ENCODE measurements at regions of chr3 and their contacts with region 1.

Region 1: GRCh38 chr3:12891985-12892839 is 50.8 kb upstream of the RPL32 start:
- DNase-seq: peak; percentile 70
- H3K4me3 ChIP-seq: no peak overlapping the region
- H3K27ac ChIP-seq: no peak overlapping the region
- H3K4me1 ChIP-seq: peaks cover 4% of the 10 kb centered on the region
- CTCF ChIP-seq: peak; percentile 95

Region 2: DNA sequence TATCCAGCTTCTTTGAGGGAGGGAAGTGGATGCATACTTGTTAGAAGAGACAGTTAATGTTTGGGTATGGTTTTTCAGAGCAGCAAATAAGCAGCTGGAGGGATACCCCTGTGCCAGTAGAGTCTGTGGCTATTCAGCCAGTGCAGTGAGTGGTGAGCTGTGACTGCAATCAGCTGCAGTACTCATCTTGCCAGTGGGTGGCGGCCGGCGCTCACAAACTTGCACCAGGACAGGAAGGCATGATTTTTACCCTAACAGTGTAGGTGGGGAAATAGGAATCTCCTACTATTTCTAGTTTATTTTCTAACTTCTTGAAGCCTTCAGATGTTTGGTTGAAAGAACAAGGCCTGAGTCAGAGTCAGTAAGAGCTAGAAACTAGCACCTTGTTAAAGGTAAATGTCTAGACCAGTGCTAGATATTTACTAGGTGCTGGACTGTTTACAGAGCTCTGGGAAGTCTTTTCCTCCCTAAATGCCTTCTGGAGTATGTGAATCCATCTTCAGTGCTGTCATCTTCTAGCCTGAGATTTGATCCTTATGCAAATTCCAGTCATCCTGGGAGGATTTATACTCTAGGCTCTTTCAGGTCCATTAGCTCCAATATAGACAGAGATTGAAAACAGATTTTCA is 757.1 kb before region 1 on chr3:
- CTCF ChIA-PET with region 1: no interaction called
- POLR2A ChIA-PET with region 1: no interaction called
- intact Hi-C with region 1: loop called (anchors 5 kb)
- DNase-seq: peak; percentile 53
- H3K4me3 ChIP-seq: no peak overlapping the region
- H3K27ac ChIP-seq: no peak overlapping the region
- H3K4me1 ChIP-seq: no peaks in the 10 kb centered on the region
- CTCF ChIP-seq: peak; percentile 91

Region 3: GRCh38 chr3:12782172-12782815 is 109.9 kb before region 1 on chr3:
- CTCF ChIA-PET with region 1: no interaction called
- POLR2A ChIA-PET with region 1: no interaction called
- intact Hi-C with region 1: loop called (anchors 5 kb)
- DNase-seq: no peak
- H3K4me3 ChIP-seq: no peak overlapping the region
- H3K27ac ChIP-seq: no peak overlapping the region
- H3K4me1 ChIP-seq: peaks cover 4% of the 10 kb centered on the region
- CTCF ChIP-seq: no peak

Region 4: GRCh38 chr3:12868039-12869034 is 23.9 kb before region 1 on chr3:
- CTCF ChIA-PET with region 1: interaction called, 8 read pairs
- POLR2A ChIA-PET with region 1: no interaction called
- intact Hi-C with region 1: loop called (anchors 1 kb)
- DNase-seq: peak; percentile 77
- H3K4me3 ChIP-seq: peak overlapping the region; percentile 46
- H3K27ac ChIP-seq: no peak overlapping the region
- H3K4me1 ChIP-seq: peaks cover 8% of the 10 kb centered on the region
- CTCF ChIP-seq: peak; percentile 87

Measured in OCI-LY7 (cell line).